ENCODE measurements at regions of chr3 and their contacts with region 1.

Region 1: DNA sequence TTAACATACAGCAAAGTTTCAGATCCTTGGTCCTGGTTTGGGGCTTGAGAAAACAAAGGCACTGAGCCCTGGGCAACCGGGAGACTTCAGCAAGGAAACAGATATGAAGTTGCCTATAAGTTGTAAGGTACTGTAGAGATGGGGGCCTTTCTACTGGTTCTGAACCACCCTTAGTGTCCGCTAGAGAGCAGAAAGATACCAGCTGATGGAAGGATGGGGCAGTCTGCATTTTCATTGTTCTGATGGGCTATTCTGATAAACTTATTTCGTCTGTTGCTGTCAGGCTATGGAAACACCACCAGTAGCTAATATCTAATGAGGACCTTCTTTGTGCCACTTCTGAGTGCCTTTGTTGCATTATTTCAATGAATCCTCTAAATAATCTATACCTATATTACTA is 38.7 kb downstream of the FGD5 start:
- DNase-seq: no peak
- H3K4me3 Mint-ChIP-seq: no peak overlapping the region
- H3K27ac Mint-ChIP-seq: no peak overlapping the region
- H3K4me1 Mint-ChIP-seq: no peaks in the 10 kb centered on the region
- H3K27me3 Mint-ChIP-seq: peaks cover 4% of the 10 kb centered on the region

Region 2: DNA sequence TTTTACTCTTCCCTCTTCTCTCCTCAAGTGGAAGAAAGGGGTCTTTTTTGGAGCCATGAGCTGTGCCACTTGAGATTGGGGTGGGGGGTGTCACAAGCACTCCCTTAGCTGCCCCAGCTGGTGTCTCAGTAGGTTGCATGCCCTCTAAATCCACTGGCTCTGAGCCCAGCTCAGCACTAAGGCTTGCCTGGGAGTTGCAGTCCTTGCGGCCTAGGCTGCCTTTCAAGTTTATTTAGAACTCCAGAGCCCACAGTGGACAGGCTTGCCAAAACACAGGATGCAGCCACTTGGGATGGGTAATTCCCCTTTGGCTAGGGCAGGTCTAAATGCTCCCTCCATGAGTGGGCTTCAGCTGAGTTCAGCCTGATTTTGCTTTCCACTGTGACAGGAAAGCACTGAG is 157.9 kb before region 1 on chr3:
- CTCF ChIA-PET with region 1: no interaction called
- POLR2A ChIA-PET with region 1: no interaction called
- intact Hi-C with region 1: no loop called
- DNase-seq: no peak
- H3K4me3 Mint-ChIP-seq: no peak overlapping the region
- H3K27ac Mint-ChIP-seq: no peak overlapping the region
- H3K4me1 Mint-ChIP-seq: no peaks in the 10 kb centered on the region
- H3K27me3 Mint-ChIP-seq: no peaks in the 10 kb centered on the region

Region 3: GRCh38 chr3:14902719-14903118 is 45.2 kb after region 1 on chr3:
- CTCF ChIA-PET with region 1: no interaction called
- POLR2A ChIA-PET with region 1: no interaction called
- intact Hi-C with region 1: loop called (anchors 10 kb)
- DNase-seq: no peak
- H3K4me3 Mint-ChIP-seq: no peak overlapping the region
- H3K27ac Mint-ChIP-seq: no peak overlapping the region
- H3K4me1 Mint-ChIP-seq: peaks cover 4% of the 10 kb centered on the region
- H3K27me3 Mint-ChIP-seq: peaks cover 11% of the 10 kb centered on the region

Region 4: GRCh38 chr3:15074493-15074892 is 217.0 kb after region 1 on chr3:
- CTCF ChIA-PET with region 1: no interaction called
- POLR2A ChIA-PET with region 1: no interaction called
- intact Hi-C with region 1: no loop called
- DNase-seq: no peak
- H3K4me3 Mint-ChIP-seq: no peak overlapping the region
- H3K27ac Mint-ChIP-seq: no peak overlapping the region
- H3K4me1 Mint-ChIP-seq: no peaks in the 10 kb centered on the region
- H3K27me3 Mint-ChIP-seq: no peaks in the 10 kb centered on the region

Measured in activated CD4-positive, alpha-beta memory T cell treated with anti-CD3 and anti-CD28 coated beads for 36 hours (primary cell).